ENCODE measurements at regions of chr21 and their contacts with region 1.

Region 1: DNA sequence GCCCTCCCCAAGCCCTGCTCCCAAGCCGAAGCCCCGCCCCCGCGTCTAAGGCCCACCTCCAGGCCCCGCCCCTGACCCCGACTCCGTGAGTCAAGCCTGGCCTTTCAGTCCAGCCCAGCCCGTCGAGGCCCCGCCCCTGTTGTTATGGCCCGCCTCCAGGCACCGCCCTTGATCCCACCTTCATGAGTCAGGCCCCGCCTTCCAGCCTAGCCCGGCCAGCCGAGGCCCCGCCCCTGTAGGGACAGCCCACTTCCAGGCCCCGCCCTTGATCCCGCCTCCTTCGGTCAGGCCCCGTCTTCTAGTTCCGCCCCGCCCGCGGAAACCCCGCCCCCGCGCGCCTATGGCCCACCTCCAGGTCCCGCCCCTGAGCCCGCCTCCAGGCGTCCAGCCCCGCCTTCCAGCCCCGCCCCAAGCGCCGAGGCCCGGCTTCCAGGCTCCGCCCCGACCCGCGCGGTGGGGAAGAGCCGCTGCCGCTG is 247 bp upstream of the DOP1B start:
- DNase-seq: peak; percentile 83
- ATAC-seq: peak; percentile 93
- H3K4me3 ChIP-seq: peak overlapping the region; percentile 71 to 76
- H3K27ac ChIP-seq: no peak overlapping the region
- H3K4me1 ChIP-seq: peaks cover 3% of the 10 kb centered on the region; the same call in 1 of the 2 replicates
- H3K27me3 ChIP-seq: no peaks in the 10 kb centered on the region
- CTCF ChIP-seq: no peak

Region 2: DNA sequence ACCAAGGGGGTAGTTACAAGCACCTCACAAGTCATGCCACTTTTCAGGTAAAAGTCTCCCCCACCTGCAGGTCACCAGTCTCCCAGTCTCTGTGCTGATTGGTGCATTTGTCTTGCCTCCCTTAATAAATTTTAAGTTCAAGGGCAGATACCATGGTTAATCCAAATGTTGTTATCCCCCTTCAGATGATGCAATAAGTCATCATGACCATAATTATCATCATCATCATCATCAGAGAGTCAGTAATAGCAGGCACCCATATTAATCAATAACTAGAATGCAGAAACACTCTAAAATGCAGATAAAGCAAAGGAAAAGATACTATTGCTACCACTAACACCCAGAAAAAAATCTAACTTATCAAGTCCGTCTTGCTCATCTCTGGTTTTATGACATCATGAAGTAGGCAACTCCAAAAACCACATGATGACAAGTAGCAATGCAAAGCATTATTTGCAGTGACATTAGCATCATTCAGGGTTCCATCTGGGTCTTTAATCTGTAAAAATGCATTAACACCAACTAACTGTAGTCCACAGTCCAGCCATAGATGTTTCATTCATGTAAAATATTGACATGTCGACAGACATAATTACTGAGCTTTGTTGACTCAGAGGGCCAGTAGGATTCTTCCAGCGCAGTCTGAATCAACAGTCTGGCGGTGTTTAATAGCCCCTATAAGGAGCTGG is 615.3 kb before region 1 on chr21:
- CTCF ChIA-PET with region 1: no interaction called
- POLR2A ChIA-PET with region 1: no interaction called
- in situ Hi-C with region 1: no loop called
- intact Hi-C with region 1: no loop called
- DNase-seq: no peak
- ATAC-seq: no peak
- H3K4me3 ChIP-seq: no peak overlapping the region
- H3K27ac ChIP-seq: no peak overlapping the region
- H3K4me1 ChIP-seq: no peaks in the 10 kb centered on the region
- H3K27me3 ChIP-seq: no peaks in the 10 kb centered on the region; the same call in 1 of the 2 replicates
- CTCF ChIP-seq: no peak

Region 3: GRCh38 chr21:36209626-36210171 is 53.3 kb after region 1 on chr21:
- CTCF ChIA-PET with region 1: interaction called, 11 read pairs
- POLR2A ChIA-PET with region 1: no interaction called
- in situ Hi-C with region 1: no loop called
- intact Hi-C with region 1: no loop called
- DNase-seq: peak; percentile 58
- ATAC-seq: peak; percentile 76
- H3K4me3 ChIP-seq: peak overlapping the region in 1 of 2 experiments; percentile 24; a peak in 2 of 4 replicates
- H3K27ac ChIP-seq: peak overlapping the region; percentile 78
- H3K4me1 ChIP-seq: peaks cover 19% of the 10 kb centered on the region
- H3K27me3 ChIP-seq: no peaks in the 10 kb centered on the region
- CTCF ChIP-seq: peak; percentile 76

Region 4: DNA sequence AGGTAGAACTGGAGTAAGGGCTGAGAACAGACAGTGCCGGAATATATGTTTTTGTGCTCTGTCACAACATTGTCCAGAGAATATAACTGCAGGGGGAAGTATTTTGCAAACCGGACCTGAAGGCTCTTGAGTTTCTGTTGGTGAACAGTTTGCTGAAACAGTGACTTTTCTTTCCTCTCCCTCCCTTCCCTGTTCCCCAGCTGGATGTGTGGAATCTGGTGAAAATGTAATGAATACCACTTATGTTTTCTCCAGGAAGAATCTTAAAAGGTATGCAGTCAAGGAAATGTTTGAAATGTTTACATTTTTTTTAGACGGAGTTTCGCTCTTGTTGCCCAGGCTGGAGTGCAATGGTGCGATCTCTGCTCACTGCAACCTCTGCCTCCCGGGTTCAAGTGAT is 252.2 kb after region 1 on chr21:
- CTCF ChIA-PET with region 1: no interaction called
- POLR2A ChIA-PET with region 1: no interaction called
- in situ Hi-C with region 1: no loop called
- intact Hi-C with region 1: no loop called
- DNase-seq: no peak
- ATAC-seq: no peak
- H3K4me3 ChIP-seq: no peak overlapping the region
- H3K27ac ChIP-seq: no peak overlapping the region
- H3K4me1 ChIP-seq: no peaks in the 10 kb centered on the region
- H3K27me3 ChIP-seq: no peaks in the 10 kb centered on the region
- CTCF ChIP-seq: no peak